ENCODE measurements at regions of chr22 and their contacts with region 1.

Region 1: GRCh38 chr22:21952586-21953571 is at the start of gene PPM1F:
- DNase-seq: peak; percentile 28
- H3K4me3 ChIP-seq: peak within 1 kb of the TSS; percentile 58 to 86 (median 76)
- H3K27ac ChIP-seq: peak within 1 kb of the TSS; percentile 81 to 89 (median 83)
- H3K4me1 ChIP-seq: peaks cover 27 to 51% (median 40%) of the 10 kb centered on the region in 3 donors
- H3K27me3 ChIP-seq: no peaks in the 10 kb centered on the region
- CTCF ChIP-seq: peak; percentile 74 to 100 (median 99)
- POLR2A ChIP-seq: peak in 3 of 4 donors; percentile 13 to 55 (median 52)
- total RNA-seq, gene PPM1F: 22.2 to 39.7 (median 25.9) TPM

Region 2: DNA sequence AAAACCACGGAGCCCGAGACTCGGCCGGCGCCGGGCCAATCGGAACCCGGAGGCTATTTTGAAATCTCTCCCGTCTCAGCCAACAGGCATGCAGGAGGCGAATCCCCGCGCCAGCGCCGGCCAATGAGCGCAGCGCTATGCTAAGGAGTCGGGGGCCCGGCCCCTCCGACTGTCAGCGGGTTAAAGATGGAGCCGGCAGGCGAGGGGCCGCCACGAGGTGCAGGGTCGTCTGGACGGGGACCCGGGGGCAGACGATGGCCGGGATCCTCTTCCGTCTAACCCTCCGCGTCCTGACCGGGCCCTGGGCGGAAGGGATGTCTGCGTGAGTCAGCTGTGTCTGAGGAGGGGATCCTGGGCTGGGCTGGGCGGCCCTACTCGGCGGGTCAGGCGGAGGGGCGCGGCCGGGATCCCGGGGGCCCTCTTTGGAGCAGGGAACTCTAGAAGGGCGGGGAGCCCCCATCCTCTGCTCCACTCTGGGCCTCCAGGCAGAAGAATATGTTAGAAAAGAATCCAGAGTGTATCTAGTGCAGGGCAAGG is 300.8 kb before region 1 on chr22:
- intact Hi-C with region 1: no loop called
- DNase-seq: peak; percentile 25
- H3K4me3 ChIP-seq: peak overlapping the region; percentile 39 to 87 (median 56)
- H3K27ac ChIP-seq: peak overlapping the region; percentile 21 to 66 (median 50)
- H3K4me1 ChIP-seq: peaks cover 14 to 37% (median 16%) of the 10 kb centered on the region in 3 donors
- H3K27me3 ChIP-seq: peaks cover 0 to 12% (median 0%) of the 10 kb centered on the region in 4 donors
- CTCF ChIP-seq: no peak
- POLR2A ChIP-seq: no peak

Region 3: DNA sequence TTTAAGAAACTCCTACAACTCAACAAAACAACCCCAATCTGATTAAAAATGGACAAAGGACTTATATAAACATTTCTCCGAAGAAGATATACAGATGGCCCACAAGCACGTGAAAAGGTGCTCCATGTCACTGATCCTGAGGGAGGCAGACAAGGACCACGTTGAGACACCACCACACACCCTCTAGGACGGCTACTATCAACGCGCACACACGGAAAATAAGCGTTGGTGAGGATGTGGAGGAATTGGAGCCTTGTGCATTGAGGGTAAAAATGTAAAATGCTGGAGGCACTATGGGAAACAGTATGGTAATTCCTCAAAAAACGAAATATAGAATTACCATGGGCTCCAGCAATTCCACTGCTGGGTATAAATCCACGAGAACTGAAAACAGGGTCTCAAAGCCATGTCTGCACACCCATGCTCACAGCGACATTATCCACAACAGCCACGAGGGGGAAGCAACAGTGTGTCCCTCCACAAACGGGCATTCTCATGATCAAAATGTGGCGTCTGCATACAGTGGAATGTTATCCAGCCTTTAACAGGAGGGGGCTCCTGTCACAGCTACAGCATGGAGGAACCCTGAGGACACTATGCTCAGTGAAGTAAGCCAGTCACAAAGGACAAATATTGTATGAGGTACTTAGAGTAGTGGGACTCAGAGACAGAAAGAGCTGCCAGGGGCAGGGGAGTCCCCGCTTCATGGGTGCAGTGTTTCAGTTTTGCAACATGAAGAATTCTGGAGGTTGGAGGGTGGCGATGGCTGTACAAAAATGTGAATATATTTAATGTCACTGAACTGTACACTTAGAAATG is 239.8 kb before region 1 on chr22:
- intact Hi-C with region 1: loop called (anchors 5 kb)
- DNase-seq: no peak
- H3K4me3 ChIP-seq: peak overlapping the region in 1 of 4 donors; percentile 6
- H3K27ac ChIP-seq: no peak overlapping the region
- H3K4me1 ChIP-seq: peaks cover 0 to 18% (median 3%) of the 10 kb centered on the region in 3 donors
- H3K27me3 ChIP-seq: no peaks in the 10 kb centered on the region
- CTCF ChIP-seq: peak; percentile 60 to 77 (median 68)
- POLR2A ChIP-seq: no peak

Region 4: DNA sequence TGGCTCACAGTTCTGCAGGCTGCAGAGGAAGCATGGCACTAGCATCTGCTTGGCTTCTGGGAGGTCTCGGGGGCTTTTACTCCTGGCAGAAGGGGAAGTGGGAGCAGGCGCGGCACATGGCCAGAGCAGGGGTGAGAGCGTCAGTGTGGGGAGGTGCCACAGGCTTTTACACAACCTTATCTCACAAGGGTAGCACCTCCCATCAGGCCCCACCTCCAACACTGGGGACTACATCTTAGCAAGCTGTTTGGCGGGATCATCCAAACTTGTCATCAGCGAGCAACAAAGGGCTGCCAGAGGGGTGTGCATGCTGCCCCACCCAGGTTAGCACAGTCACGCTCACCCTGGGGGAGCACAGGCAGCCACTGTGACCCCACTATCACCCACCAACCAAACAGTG is 198.4 kb before region 1 on chr22:
- intact Hi-C with region 1: no loop called
- DNase-seq: no peak
- H3K4me3 ChIP-seq: peak overlapping the region in 1 of 4 donors; percentile 1
- H3K27ac ChIP-seq: peak overlapping the region in 2 of 4 donors; percentile 25 to 34
- H3K4me1 ChIP-seq: peaks cover 0 to 27% (median 5%) of the 10 kb centered on the region in 3 donors
- H3K27me3 ChIP-seq: no peaks in the 10 kb centered on the region
- CTCF ChIP-seq: no peak
- POLR2A ChIP-seq: no peak

Region 5: DNA sequence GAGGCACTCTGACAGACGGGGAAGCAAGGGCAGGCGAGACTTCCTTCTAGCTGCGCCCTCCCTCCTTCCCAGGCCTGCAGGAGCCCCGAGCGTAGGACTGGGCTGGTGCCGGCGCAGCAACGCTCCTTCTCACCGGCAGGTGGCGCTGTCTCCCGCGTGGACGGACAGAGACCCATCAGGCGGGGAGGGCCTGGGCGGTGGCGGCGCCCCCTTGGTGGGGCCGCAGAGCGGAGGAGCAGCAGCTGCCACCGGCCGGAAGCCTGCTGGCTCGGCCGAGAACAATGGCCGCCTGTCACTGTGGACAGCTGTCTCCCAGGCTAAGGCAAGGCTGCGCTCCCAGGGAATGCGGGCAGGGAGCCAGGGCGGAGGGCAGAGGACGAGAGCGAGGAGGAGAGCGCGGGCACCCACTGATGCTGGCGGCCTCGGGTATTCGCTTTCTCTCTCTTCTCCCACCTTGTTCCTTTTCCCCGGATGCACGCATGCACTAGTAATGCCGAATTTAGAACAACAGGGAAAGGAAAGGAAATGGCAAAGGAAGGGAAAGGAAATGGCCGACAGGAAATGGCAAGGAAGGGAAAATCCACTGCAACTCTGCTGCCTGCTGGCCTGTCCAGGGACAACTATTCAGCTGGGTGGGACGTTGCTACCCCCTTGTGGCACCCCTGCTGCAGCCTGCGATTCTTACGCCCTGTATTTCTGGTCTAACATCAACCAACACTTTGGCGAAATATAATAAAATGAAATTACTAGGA is 14.6 kb before region 1 on chr22:
- intact Hi-C with region 1: loop called (anchors 2 kb)
- DNase-seq: peak; percentile 52
- H3K4me3 ChIP-seq: peak overlapping the region; percentile 38 to 68 (median 59)
- H3K27ac ChIP-seq: peak overlapping the region; percentile 92 to 96 (median 96)
- H3K4me1 ChIP-seq: peaks cover 47 to 81% (median 68%) of the 10 kb centered on the region in 3 donors
- H3K27me3 ChIP-seq: no peaks in the 10 kb centered on the region
- CTCF ChIP-seq: peak; percentile 97 to 100 (median 100)
- POLR2A ChIP-seq: peak in 1 of 4 donors; percentile 37